Gastrocnemius medialis (tissue), 4 donors: ENCODE measurements at regions of chr2 and their contacts with region 1.

Region 1: DNA sequence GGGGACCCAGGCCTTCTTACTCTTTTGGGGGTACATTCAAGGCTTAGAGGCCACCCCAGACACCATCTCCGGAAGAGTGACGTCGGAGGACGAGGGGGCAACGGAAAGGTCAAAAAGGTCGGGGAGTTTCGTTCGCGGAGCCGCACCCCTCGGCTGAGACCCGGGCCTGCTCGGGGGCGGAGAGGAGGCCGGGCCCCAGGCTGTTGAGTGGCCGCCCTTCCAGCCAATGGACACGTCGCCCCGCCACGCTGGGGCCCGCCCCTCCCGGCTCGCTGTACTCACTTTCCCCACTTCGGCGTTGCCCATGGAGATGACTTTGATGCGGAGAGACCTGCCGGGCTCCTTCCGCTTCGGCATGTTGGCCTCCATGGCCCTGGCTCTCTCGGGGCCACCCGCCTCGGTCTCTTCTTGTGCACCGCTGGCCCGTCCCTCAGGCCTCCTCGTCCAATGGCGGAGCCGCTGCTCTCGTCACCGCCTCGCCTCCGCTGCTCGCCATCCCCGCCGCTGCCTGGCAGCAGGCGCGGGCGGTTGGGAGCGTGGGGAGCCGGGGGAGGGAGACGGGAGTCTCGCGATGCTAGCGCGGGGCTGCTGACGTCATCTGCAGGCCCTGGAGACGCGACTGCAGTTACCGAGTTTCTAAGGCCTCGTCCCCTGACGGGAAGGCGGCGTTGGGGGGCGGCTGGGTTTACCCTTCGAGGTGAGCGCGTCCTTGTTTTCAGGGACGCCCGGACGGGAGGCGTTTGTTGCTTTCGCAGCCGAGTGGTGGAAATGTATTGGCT is at the start of gene DNAJC27:
- DNase-seq: peak; percentile 97
- ATAC-seq: peak; percentile 86 to 89
- H3K4me3 ChIP-seq: peak within 1 kb of the TSS; percentile 73 to 95 (median 88)
- H3K27ac ChIP-seq: peak within 1 kb of the TSS; percentile 96 to 100 (median 98)
- H3K4me1 ChIP-seq: peaks cover 9 to 22% of the 10 kb centered on the region in 2 donors
- H3K27me3 ChIP-seq: no peaks in the 10 kb centered on the region
- CTCF ChIP-seq: no peak
- POLR2A ChIP-seq: peak; percentile 88 to 96
- total RNA-seq, gene DNAJC27: 3.0 to 11.0 (median 4.9) TPM

Region 2: GRCh38 chr2:25029183-25029554 is 57.4 kb after region 1 on chr2:
- in situ Hi-C with region 1: no loop called
- intact Hi-C with region 1: loop called (anchors 5 kb)
- DNase-seq: peak; percentile 20 to 48
- ATAC-seq: peak; percentile 90 to 91
- H3K4me3 ChIP-seq: no peak overlapping the region
- H3K27ac ChIP-seq: peak overlapping the region; percentile 40 to 72 (median 59)
- H3K4me1 ChIP-seq: peaks cover 29% of the 10 kb centered on the region in 2 donors
- H3K27me3 ChIP-seq: no peaks in the 10 kb centered on the region
- CTCF ChIP-seq: no peak
- POLR2A ChIP-seq: no peak

Region 3: GRCh38 chr2:25041928-25042320 is 70.2 kb after region 1 on chr2 and contains the start of gene EFR3B:
- in situ Hi-C with region 1: loop called in 1 of 4 experiments (anchors 10 kb)
- intact Hi-C with region 1: loop called (anchors 1 kb)
- DNase-seq: peak; percentile 93 to 94
- ATAC-seq: peak; percentile 86 to 88
- H3K4me3 ChIP-seq: peak within 1 kb of the TSS; percentile 60 to 98 (median 66)
- H3K27ac ChIP-seq: peak within 1 kb of the TSS; percentile 69 to 87 (median 76)
- H3K4me1 ChIP-seq: peaks cover 15 to 22% of the 10 kb centered on the region in 2 donors
- H3K27me3 ChIP-seq: no peaks in the 10 kb centered on the region
- CTCF ChIP-seq: peak in 2 of 5 experiments; percentile 24 to 25
- POLR2A ChIP-seq: peak; percentile 54 to 77
- total RNA-seq, gene EFR3B: 0.29 to 1.4 (median 0.67) TPM

Region 4: DNA sequence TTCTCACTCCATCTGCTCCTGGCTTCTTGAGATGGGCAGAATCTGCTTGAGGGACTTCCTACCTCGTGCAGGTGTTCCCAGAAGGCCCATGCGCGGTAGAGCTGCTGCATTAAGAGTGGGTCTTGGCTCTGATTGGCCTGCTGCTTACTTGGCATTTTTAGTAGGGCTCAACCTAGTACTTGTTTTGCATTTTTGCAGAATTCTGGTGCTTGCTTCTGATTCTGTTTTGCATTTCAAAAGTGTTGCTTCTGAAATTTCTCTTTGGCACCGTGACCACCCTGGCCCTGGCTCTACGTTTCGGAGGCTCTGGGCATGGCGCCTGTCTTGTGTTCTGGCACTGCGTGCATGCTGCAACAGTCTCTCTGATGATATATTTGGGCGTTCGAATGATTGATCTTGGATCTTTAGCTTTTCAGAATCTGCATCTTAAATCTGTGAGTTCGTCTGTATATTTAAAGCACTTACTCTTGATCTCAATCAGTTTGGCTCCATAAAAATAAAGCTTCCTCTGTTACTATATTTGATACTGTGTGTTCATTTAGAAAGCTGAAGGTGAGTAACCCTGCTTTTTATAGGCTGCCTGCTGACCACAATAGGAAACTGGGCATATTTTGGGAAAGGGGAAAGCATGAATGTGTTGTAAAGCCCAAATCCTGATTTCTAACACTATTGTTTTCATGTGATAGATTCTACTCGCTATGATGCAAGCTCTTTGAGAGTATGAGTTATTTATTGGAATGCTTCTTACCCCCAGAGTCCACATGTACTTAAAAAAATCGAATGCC is 92.3 kb after region 1 on chr2:
- in situ Hi-C with region 1: no loop called
- intact Hi-C with region 1: loop called (anchors 1 kb)
- DNase-seq: no peak
- ATAC-seq: peak; percentile 97 to 98
- H3K4me3 ChIP-seq: peak overlapping the region in 3 of 4 donors; percentile 23 to 42 (median 30)
- H3K27ac ChIP-seq: peak overlapping the region; percentile 75 to 82 (median 76)
- H3K4me1 ChIP-seq: peaks cover 20 to 28% of the 10 kb centered on the region in 2 donors
- H3K27me3 ChIP-seq: no peaks in the 10 kb centered on the region
- CTCF ChIP-seq: no peak
- POLR2A ChIP-seq: no peak

Region 5: GRCh38 chr2:25131567-25132298 is 160.0 kb after region 1 on chr2:
- in situ Hi-C with region 1: loop called (anchors 5 kb)
- intact Hi-C with region 1: loop called (anchors 1 kb)
- DNase-seq: no peak
- ATAC-seq: no peak
- H3K4me3 ChIP-seq: peak overlapping the region; percentile 9 to 38 (median 29)
- H3K27ac ChIP-seq: no peak overlapping the region
- H3K4me1 ChIP-seq: no peaks in the 10 kb centered on the region
- H3K27me3 ChIP-seq: no peaks in the 10 kb centered on the region
- CTCF ChIP-seq: no peak
- POLR2A ChIP-seq: no peak

Region 6: GRCh38 chr2:25197336-25198208 is 225.8 kb after region 1 on chr2:
- in situ Hi-C with region 1: no loop called
- intact Hi-C with region 1: loop called (anchors 10 kb)
- DNase-seq: no peak
- ATAC-seq: no peak
- H3K4me3 ChIP-seq: no peak overlapping the region
- H3K27ac ChIP-seq: no peak overlapping the region
- H3K4me1 ChIP-seq: no peaks in the 10 kb centered on the region
- H3K27me3 ChIP-seq: no peaks in the 10 kb centered on the region
- CTCF ChIP-seq: no peak
- POLR2A ChIP-seq: no peak